Ascending aorta (tissue), 2 donors: ENCODE measurements at regions of chr1 and their contacts with region 1.

Region 1: DNA sequence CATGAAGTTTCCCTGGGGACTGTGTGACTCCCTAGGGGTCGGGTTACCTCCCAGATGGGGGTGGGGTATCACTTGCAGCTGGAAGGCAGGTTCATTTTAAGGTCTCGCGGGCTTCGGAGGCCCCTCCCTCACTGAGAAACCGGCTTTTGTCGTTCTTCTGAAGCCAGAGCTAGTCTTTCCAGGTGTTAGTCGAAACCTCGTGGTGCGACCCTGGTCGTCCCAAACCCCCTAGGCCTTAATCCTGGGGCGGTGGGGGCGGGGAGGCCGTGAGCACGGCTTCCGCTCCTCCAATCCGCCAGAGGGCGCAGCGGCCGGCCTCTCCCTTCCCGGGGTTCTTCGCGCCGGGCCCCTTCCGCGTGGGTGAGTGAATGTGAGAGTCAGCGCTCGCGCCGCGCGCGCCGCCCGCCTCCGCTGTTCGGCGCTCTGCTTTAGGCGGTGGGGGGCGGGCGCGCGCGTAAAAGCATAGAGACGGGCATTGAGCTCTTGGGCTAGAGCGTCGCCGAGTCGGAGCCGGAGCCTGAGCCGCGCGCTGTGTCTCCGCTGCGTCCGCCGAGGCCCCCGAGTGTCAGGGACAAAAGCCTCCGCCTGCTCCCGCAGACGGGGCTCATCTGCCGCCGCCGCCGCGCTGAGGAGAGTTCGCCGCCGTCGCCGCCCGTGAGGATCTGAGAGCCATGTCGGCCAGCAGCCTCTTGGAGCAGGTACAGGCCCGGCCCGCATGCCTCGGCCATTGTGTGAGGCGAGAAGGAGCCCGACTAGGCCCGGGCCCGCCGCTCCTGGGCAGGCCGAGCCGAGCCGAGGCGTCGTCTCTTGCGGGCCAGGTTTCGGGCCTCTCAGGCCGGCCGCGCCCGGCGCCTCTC is at the start of gene YTHDF2:
- DNase-seq: peak; percentile 86 to 99
- H3K4me3 ChIP-seq: peak within 1 kb of the TSS; percentile 96 to 97
- H3K27ac ChIP-seq: peak within 1 kb of the TSS; percentile 93 to 94
- H3K4me1 ChIP-seq: peaks cover 5 to 19% of the 10 kb centered on the region in 2 donors
- H3K27me3 ChIP-seq: no peaks in the 10 kb centered on the region
- CTCF ChIP-seq: peak; percentile 93 to 95 (median 95)
- total RNA-seq, gene YTHDF2: 50.6 TPM

Region 2: DNA sequence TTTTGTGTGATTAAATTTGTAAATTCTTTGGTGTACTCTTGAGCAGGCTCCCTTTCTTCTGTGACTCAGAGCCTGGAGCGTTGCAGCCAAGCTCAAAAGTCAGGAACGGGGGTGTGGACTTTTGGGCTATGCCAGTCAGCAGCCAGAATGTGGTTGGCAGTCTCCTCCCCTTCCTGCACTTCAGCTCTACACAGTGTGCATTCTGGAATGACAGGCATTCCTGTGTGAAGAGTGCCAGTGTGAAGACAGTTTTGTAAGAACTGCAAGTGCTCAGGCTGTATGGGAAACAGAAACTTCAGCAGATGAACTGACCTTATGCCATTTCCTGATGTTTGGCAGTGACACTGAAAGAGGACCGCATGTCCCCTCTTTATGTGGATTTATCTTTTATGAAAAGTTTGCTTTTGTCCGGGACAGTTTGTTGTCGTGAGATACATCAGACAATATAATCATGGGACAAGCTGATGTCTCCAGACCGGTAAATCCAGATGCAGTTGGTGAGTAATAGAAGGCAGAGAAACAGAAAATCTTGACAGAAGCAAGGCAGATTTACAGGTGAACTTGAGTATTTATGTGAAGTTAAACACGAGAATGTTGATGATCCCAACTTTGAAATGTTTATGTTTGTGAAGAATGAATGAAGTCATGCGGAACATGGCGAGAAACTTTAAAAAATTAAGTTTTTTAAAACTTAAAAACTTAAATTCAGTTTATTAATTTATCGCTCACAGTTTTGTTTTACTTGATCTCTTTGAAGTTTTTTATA is 298.6 kb before region 1 on chr1:
- intact Hi-C with region 1: loop called (anchors 5 kb)
- DNase-seq: peak; percentile 59 to 93
- H3K4me3 ChIP-seq: peak overlapping the region; percentile 29 to 48
- H3K27ac ChIP-seq: peak overlapping the region; percentile 81 to 85
- H3K4me1 ChIP-seq: peaks cover 11% of the 10 kb centered on the region in 2 donors
- H3K27me3 ChIP-seq: no peaks in the 10 kb centered on the region
- CTCF ChIP-seq: no peak

Region 3: GRCh38 chr1:28668191-28668955 is 68.3 kb before region 1 on chr1 and contains the start of gene GMEB1:
- intact Hi-C with region 1: loop called (anchors 2 kb)
- DNase-seq: peak; percentile 39 to 90
- H3K4me3 ChIP-seq: peak within 1 kb of the TSS; percentile 71 to 75
- H3K27ac ChIP-seq: peak within 1 kb of the TSS; percentile 94 to 100
- H3K4me1 ChIP-seq: peaks cover 0 to 12% of the 10 kb centered on the region in 2 donors
- H3K27me3 ChIP-seq: no peaks in the 10 kb centered on the region
- CTCF ChIP-seq: no peak
- total RNA-seq, gene GMEB1: 5.2 TPM

Region 4: DNA sequence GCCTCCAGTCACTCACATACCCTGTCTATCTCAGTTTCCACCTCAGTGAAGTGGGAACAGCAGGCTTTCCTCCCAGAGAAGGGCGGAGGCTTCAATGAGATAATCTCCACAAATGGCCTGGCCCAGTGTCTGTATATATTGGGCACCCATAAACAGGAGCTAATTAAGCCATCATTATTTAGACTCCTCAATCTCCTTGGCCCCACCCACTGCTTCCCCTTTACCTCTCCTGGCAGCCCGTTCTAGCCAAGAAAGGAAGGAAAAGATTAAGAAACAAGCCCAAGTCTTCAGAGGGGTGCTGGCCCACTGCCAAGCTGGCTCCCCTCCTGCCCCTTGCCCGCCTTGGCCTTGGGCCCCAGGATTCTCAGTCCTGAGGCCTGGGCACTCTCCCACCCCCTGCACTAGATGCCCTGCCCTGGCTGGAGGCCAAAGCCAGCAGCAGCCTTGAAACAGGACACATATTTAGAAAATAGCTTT is 161.8 kb after region 1 on chr1:
- intact Hi-C with region 1: no loop called
- DNase-seq: no peak
- H3K4me3 ChIP-seq: no peak overlapping the region
- H3K27ac ChIP-seq: no peak overlapping the region
- H3K4me1 ChIP-seq: peaks cover 0 to 11% of the 10 kb centered on the region in 2 donors
- H3K27me3 ChIP-seq: no peaks in the 10 kb centered on the region
- CTCF ChIP-seq: no peak

Region 5: DNA sequence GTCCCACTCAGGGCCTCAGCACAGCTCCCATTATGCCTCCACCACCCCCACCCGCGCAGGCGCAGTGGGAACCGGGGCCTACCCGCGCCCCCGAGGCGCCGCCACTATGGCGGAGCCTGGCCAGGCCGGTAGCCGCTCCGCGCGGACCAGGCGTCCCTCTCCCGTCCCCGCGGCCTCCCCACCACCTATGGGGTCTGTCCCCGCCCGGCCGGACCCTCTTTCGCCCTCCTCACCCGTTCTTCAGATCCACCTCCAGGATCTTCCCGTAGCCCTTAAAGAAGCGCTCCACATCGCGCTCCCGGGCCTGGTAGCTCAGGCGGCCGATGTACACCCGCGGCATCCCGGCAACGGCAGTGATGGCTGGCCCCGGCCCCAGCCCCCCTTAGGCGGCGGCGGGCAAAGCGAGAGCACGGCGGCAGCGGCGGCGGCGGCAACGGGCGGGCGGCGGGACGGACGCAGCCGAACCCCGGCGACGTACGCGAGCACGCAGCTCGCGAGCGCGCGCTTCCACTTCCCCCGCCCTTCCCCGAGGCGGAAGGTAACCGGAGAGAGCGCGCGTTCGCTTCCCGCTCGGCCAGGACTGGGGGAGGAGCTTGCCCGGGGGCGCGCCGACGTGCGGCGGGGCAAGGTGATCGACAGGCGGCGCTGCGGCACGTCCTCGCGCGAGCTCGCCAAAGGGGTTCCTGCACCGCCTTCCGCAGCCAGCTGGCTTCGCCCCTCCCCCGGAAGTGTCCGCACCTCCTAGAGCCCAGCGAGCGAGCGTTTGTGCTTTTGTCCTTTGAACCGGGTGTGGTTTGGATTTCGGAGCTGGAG is 444.9 kb after region 1 on chr1 and contains the start of gene SRSF4:
- intact Hi-C with region 1: loop called (anchors 1 kb)
- DNase-seq: peak; percentile 92 to 99
- H3K4me3 ChIP-seq: peak within 1 kb of the TSS; percentile 95 to 99
- H3K27ac ChIP-seq: peak within 1 kb of the TSS; percentile 100
- H3K4me1 ChIP-seq: peaks cover 18 to 30% of the 10 kb centered on the region in 2 donors
- H3K27me3 ChIP-seq: no peaks in the 10 kb centered on the region
- CTCF ChIP-seq: peak; percentile 73 to 79 (median 75)
- total RNA-seq, gene SRSF4: 49.1 TPM